ENCODE measurements at regions of chr1 and their contacts with region 1.

Region 1: GRCh38 chr1:156090822-156091188 is 8.5 kb upstream of the MEX3A start:
- DNase-seq: peak; percentile 84 to 96 (median 90)
- ATAC-seq: peak; percentile 98
- H3K4me3 ChIP-seq: no peak overlapping the region
- H3K4me3 Mint-ChIP-seq: no peak overlapping the region
- H3K27ac ChIP-seq: no peak overlapping the region
- H3K27ac Mint-ChIP-seq: no peak overlapping the region
- H3K4me1 ChIP-seq: peaks cover 18% of the 10 kb centered on the region
- H3K4me1 Mint-ChIP-seq: peaks cover 3% of the 10 kb centered on the region
- H3K27me3 ChIP-seq: peaks cover 0 to 7% of the 10 kb centered on the region in 2 experiments
- H3K27me3 Mint-ChIP-seq: peaks cover 28% of the 10 kb centered on the region
- CTCF ChIP-seq: peak; percentile 80

Region 2: GRCh38 chr1:156129706-156130581 is 39.1 kb after region 1 on chr1:
- CTCF ChIA-PET with region 1: interaction called, 194 read pairs
- POLR2A ChIA-PET with region 1: interaction called, 18 read pairs
- intact Hi-C with region 1: loop called (anchors 1 kb)
- DNase-seq: peak; percentile 60 to 87 (median 72)
- ATAC-seq: no peak
- H3K4me3 ChIP-seq: no peak overlapping the region
- H3K4me3 Mint-ChIP-seq: peak overlapping the region; percentile 60
- H3K27ac ChIP-seq: no peak overlapping the region
- H3K27ac Mint-ChIP-seq: peak overlapping the region; percentile 78
- H3K4me1 ChIP-seq: peaks cover 58% of the 10 kb centered on the region
- H3K4me1 Mint-ChIP-seq: peaks cover 50% of the 10 kb centered on the region
- H3K27me3 ChIP-seq: no peaks in the 10 kb centered on the region
- H3K27me3 Mint-ChIP-seq: no peaks in the 10 kb centered on the region
- CTCF ChIP-seq: peak; percentile 92

Region 3: DNA sequence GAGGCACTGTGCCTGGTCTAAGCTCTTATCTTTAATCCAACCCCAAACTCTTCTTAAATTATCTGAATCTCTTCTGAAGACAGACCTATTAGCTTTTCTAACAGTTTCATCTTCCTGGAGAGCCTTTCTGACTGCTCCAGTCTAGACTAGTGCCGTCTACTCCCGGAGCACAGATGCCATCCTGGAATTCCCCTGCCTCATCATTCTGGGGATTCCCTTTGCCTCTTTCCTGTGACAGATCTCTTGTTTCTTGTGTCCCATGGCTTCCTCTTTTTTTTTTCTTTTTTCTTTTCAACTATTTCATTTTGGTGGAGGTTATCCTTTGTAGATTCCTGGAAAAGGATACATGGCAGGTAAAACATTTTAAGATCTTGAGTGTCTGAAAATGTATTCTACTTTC is 74.3 kb after region 1 on chr1:
- CTCF ChIA-PET with region 1: no interaction called
- POLR2A ChIA-PET with region 1: no interaction called
- intact Hi-C with region 1: no loop called
- DNase-seq: peak in 2 of 14 experiments; percentile 71 to 82
- ATAC-seq: no peak
- H3K4me3 ChIP-seq: no peak overlapping the region
- H3K4me3 Mint-ChIP-seq: no peak overlapping the region
- H3K27ac ChIP-seq: no peak overlapping the region
- H3K27ac Mint-ChIP-seq: no peak overlapping the region
- H3K4me1 ChIP-seq: peaks cover 12% of the 10 kb centered on the region
- H3K4me1 Mint-ChIP-seq: peaks cover 14% of the 10 kb centered on the region
- H3K27me3 ChIP-seq: no peaks in the 10 kb centered on the region
- H3K27me3 Mint-ChIP-seq: no peaks in the 10 kb centered on the region
- CTCF ChIP-seq: no peak

Region 4: GRCh38 chr1:156319664-156320063 is 228.9 kb after region 1 on chr1:
- CTCF ChIA-PET with region 1: no interaction called
- POLR2A ChIA-PET with region 1: no interaction called
- intact Hi-C with region 1: loop called in 1 of 2 experiments (anchors 5 kb)
- DNase-seq: peak in 4 of 14 experiments; percentile 25 to 52 (median 39)
- ATAC-seq: no peak
- H3K4me3 ChIP-seq: no peak overlapping the region
- H3K4me3 Mint-ChIP-seq: no peak overlapping the region
- H3K27ac ChIP-seq: no peak overlapping the region
- H3K27ac Mint-ChIP-seq: no peak overlapping the region
- H3K4me1 ChIP-seq: no peaks in the 10 kb centered on the region
- H3K4me1 Mint-ChIP-seq: no peaks in the 10 kb centered on the region
- H3K27me3 ChIP-seq: no peaks in the 10 kb centered on the region
- H3K27me3 Mint-ChIP-seq: no peaks in the 10 kb centered on the region
- CTCF ChIP-seq: peak; percentile 56

Region 5: GRCh38 chr1:156445789-156446263 is 355.0 kb after region 1 on chr1:
- CTCF ChIA-PET with region 1: no interaction called
- POLR2A ChIA-PET with region 1: no interaction called
- intact Hi-C with region 1: loop called in 1 of 2 experiments (anchors 5 kb)
- DNase-seq: peak; percentile 61 to 88 (median 72)
- ATAC-seq: peak; percentile 95
- H3K4me3 ChIP-seq: no peak overlapping the region
- H3K4me3 Mint-ChIP-seq: no peak overlapping the region
- H3K27ac ChIP-seq: no peak overlapping the region
- H3K27ac Mint-ChIP-seq: no peak overlapping the region
- H3K4me1 ChIP-seq: peaks cover 7% of the 10 kb centered on the region
- H3K4me1 Mint-ChIP-seq: peaks cover 9% of the 10 kb centered on the region
- H3K27me3 ChIP-seq: peaks cover 41 to 43% of the 10 kb centered on the region in 2 experiments
- H3K27me3 Mint-ChIP-seq: peaks cover 53% of the 10 kb centered on the region
- CTCF ChIP-seq: peak; percentile 90